Pancreas (tissue), 10 donors: ENCODE measurements at regions of chr12 and their contacts with region 1.

Region 1: GRCh38 chr12:2057041-2057794 is 4.4 kb downstream of the CACNA1C start:
- DNase-seq: peak in 5 of 6 donors; percentile 12 to 77 (median 47)
- ATAC-seq: peak in 3 of 4 donors; percentile 39 to 61 (median 46)
- H3K4me3 ChIP-seq: no peak overlapping the region
- H3K27ac ChIP-seq: no peak overlapping the region
- H3K4me1 ChIP-seq: peaks cover 0 to 3% (median 0%) of the 10 kb centered on the region in 3 donors
- H3K27me3 ChIP-seq: peaks cover 0 to 5% (median 3%) of the 10 kb centered on the region in 4 donors
- CTCF ChIP-seq: peak in 3 of 4 donors; percentile 26 to 54 (median 41)

Region 2: GRCh38 chr12:2137711-2138693 is 80.8 kb after region 1 on chr12:
- intact Hi-C with region 1: no loop called
- DNase-seq: no peak
- ATAC-seq: no peak
- H3K4me3 ChIP-seq: no peak overlapping the region
- H3K27ac ChIP-seq: no peak overlapping the region
- H3K4me1 ChIP-seq: no peaks in the 10 kb centered on the region
- H3K27me3 ChIP-seq: no peaks in the 10 kb centered on the region
- CTCF ChIP-seq: no peak

Region 3: GRCh38 chr12:2284857-2285256 is 227.6 kb after region 1 on chr12:
- intact Hi-C with region 1: loop called in 1 of 3 experiments (anchors 5 kb)
- DNase-seq: peak in 4 of 6 donors; percentile 42 to 78 (median 48)
- ATAC-seq: peak; percentile 66 to 86 (median 83)
- H3K4me3 ChIP-seq: no peak overlapping the region
- H3K27ac ChIP-seq: no peak overlapping the region
- H3K4me1 ChIP-seq: no peaks in the 10 kb centered on the region
- H3K27me3 ChIP-seq: no peaks in the 10 kb centered on the region
- CTCF ChIP-seq: peak in 2 of 4 donors; percentile 32

Region 4: GRCh38 chr12:2414810-2415567 is 357.8 kb after region 1 on chr12:
- intact Hi-C with region 1: no loop called
- DNase-seq: peak in 1 of 6 donors; percentile 13
- ATAC-seq: no peak
- H3K4me3 ChIP-seq: no peak overlapping the region
- H3K27ac ChIP-seq: no peak overlapping the region
- H3K4me1 ChIP-seq: no peaks in the 10 kb centered on the region
- H3K27me3 ChIP-seq: no peaks in the 10 kb centered on the region
- CTCF ChIP-seq: no peak

Region 5: GRCh38 chr12:2583091-2583497 is 525.9 kb after region 1 on chr12:
- intact Hi-C with region 1: loop called in 1 of 3 experiments (anchors 10 kb)
- DNase-seq: peak in 5 of 6 donors; percentile 21 to 90 (median 60)
- ATAC-seq: peak; percentile 89 to 97 (median 94)
- H3K4me3 ChIP-seq: peak overlapping the region in 1 of 4 donors; percentile 30
- H3K27ac ChIP-seq: no peak overlapping the region
- H3K4me1 ChIP-seq: no peaks in the 10 kb centered on the region
- H3K27me3 ChIP-seq: peaks cover 0 to 6% (median 0%) of the 10 kb centered on the region in 4 donors
- CTCF ChIP-seq: peak; percentile 65 to 90 (median 84)